Psoas muscle (tissue), 8 donors: ENCODE measurements at regions of chr22 and their contacts with region 1.

Region 1: GRCh38 chr22:27919942-27920687 is 1.1 kb upstream of the PITPNB start:
- DNase-seq: peak in 1 of 2 donors; percentile 21
- ATAC-seq: peak; percentile 53 to 73 (median 59)
- H3K4me3 ChIP-seq: peak overlapping the region; percentile 94
- H3K27ac ChIP-seq: peak overlapping the region; percentile 97
- H3K4me1 ChIP-seq: peaks cover 35% of the 10 kb centered on the region
- H3K27me3 ChIP-seq: no peaks in the 10 kb centered on the region
- CTCF ChIP-seq: no peak

Region 2: GRCh38 chr22:27959335-27960090 is 39.4 kb after region 1 on chr22:
- intact Hi-C with region 1: loop called in 1 of 2 experiments (anchors 5 kb)
- DNase-seq: no peak
- ATAC-seq: peak; percentile 25 to 70 (median 64)
- H3K4me3 ChIP-seq: no peak overlapping the region
- H3K27ac ChIP-seq: peak overlapping the region; percentile 60
- H3K4me1 ChIP-seq: peaks cover 26% of the 10 kb centered on the region
- H3K27me3 ChIP-seq: no peaks in the 10 kb centered on the region
- CTCF ChIP-seq: no peak